Panc1 (cell line): ENCODE measurements at regions of chr7 and their contacts with region 1.

Region 1: DNA sequence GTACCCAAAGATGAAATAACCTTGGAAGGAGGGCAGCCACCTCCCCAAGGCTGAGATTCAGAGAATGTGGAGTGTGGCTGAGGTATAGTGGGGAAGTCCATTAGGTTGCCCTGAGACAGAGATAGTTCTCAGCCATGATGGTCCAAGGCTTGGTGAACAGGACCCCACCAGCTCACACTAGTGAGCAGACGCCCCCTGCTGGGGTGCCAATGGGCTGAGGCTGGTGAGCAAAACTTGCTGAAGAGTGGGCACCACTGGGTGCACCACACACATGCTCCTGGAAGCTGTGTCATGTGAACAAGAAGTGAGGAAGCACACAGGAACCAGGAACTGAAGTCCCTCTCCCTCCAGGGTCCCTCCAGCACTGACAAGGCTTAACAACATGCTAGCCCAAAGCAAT is 8.9 kb downstream of the FBXL13 start:
- DNase-seq: no peak
- ATAC-seq: peak; percentile 72
- H3K4me3 ChIP-seq: no peak overlapping the region
- H3K27ac ChIP-seq: no peak overlapping the region
- H3K4me1 ChIP-seq: peaks cover 7% of the 10 kb centered on the region; the same call in 1 of the 2 replicates
- H3K27me3 ChIP-seq: no peaks in the 10 kb centered on the region
- CTCF ChIP-seq: peak; percentile 69

Region 2: GRCh38 chr7:102814025-102814471 is 251.6 kb before region 1 on chr7:
- CTCF ChIA-PET with region 1: interaction called, 12 read pairs
- POLR2A ChIA-PET with region 1: no interaction called
- in situ Hi-C with region 1: no loop called
- intact Hi-C with region 1: no loop called
- DNase-seq: no peak
- ATAC-seq: no peak
- H3K4me3 ChIP-seq: no peak overlapping the region
- H3K27ac ChIP-seq: no peak overlapping the region
- H3K4me1 ChIP-seq: no peaks in the 10 kb centered on the region
- H3K27me3 ChIP-seq: no peaks in the 10 kb centered on the region
- CTCF ChIP-seq: no peak

Region 3: GRCh38 chr7:102883098-102883860 is 182.4 kb before region 1 on chr7:
- CTCF ChIA-PET with region 1: interaction called, 11 read pairs
- POLR2A ChIA-PET with region 1: no interaction called
- in situ Hi-C with region 1: no loop called
- intact Hi-C with region 1: no loop called
- DNase-seq: no peak
- ATAC-seq: peak; percentile 91
- H3K4me3 ChIP-seq: no peak overlapping the region
- H3K27ac ChIP-seq: peak overlapping the region; percentile 71
- H3K4me1 ChIP-seq: peaks cover 15% of the 10 kb centered on the region
- H3K27me3 ChIP-seq: no peaks in the 10 kb centered on the region
- CTCF ChIP-seq: no peak

Region 4: GRCh38 chr7:103003004-103003403 is 62.7 kb before region 1 on chr7:
- CTCF ChIA-PET with region 1: no interaction called
- POLR2A ChIA-PET with region 1: no interaction called
- in situ Hi-C with region 1: no loop called
- intact Hi-C with region 1: no loop called
- DNase-seq: no peak
- ATAC-seq: no peak
- H3K4me3 ChIP-seq: no peak overlapping the region
- H3K27ac ChIP-seq: no peak overlapping the region
- H3K4me1 ChIP-seq: no peaks in the 10 kb centered on the region
- H3K27me3 ChIP-seq: no peaks in the 10 kb centered on the region
- CTCF ChIP-seq: no peak

Region 5: DNA sequence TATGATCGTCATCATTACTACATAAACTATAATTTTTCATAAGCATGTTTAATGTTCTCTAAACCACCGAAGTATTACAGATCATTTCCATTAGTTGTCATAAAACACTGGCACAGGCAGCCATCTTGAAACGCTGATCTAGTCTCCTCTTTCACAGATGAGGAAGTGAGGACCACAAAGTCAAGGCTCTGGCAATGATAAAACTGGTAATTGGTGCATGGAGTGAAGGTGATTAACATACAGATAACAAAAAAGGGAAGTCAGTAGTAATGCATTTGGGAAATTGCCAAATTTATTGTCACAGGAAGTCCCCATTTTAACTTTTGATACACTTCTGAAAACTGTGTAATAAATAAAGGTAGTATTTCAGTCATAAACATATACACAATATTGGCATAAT is 40.3 kb before region 1 on chr7:
- CTCF ChIA-PET with region 1: no interaction called
- POLR2A ChIA-PET with region 1: interaction called, 12 read pairs
- in situ Hi-C with region 1: no loop called
- intact Hi-C with region 1: no loop called
- DNase-seq: no peak
- ATAC-seq: no peak
- H3K4me3 ChIP-seq: no peak overlapping the region
- H3K27ac ChIP-seq: no peak overlapping the region
- H3K4me1 ChIP-seq: no peaks in the 10 kb centered on the region
- H3K27me3 ChIP-seq: no peaks in the 10 kb centered on the region
- CTCF ChIP-seq: no peak

Region 6: DNA sequence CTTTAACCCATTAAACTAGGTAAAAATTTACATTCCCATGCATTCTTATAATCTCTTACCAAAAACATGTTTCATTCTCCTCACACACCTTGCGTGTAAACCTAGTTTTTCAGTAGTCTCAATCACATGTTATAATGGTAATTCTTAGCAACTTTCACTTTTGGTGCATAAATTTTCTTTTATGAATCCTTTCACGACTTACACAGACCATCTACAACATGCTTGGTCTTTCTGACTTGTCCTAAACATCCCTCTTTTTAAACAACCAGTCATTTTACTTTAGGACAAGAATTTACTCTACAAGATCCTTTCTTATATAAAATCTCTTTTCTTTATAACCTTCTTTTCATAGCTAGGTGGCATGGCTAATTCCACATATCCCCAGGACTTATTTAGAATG is 16.8 kb before region 1 on chr7:
- CTCF ChIA-PET with region 1: no interaction called
- POLR2A ChIA-PET with region 1: interaction called, 11 read pairs
- in situ Hi-C with region 1: no loop called
- intact Hi-C with region 1: no loop called
- DNase-seq: no peak
- ATAC-seq: no peak
- H3K4me3 ChIP-seq: no peak overlapping the region
- H3K27ac ChIP-seq: no peak overlapping the region
- H3K4me1 ChIP-seq: no peaks in the 10 kb centered on the region
- H3K27me3 ChIP-seq: no peaks in the 10 kb centered on the region
- CTCF ChIP-seq: no peak

Region 7: GRCh38 chr7:103083210-103083609 is 17.5 kb after region 1 on chr7:
- CTCF ChIA-PET with region 1: no interaction called
- POLR2A ChIA-PET with region 1: no interaction called
- in situ Hi-C with region 1: no loop called
- intact Hi-C with region 1: no loop called
- DNase-seq: no peak
- ATAC-seq: no peak
- H3K4me3 ChIP-seq: no peak overlapping the region
- H3K27ac ChIP-seq: no peak overlapping the region
- H3K4me1 ChIP-seq: no peaks in the 10 kb centered on the region; the same call in 1 of the 2 replicates
- H3K27me3 ChIP-seq: no peaks in the 10 kb centered on the region
- CTCF ChIP-seq: no peak